Naive thymus-derived CD4-positive, alpha-beta T cell (primary cell): ENCODE measurements at regions of chr2 and their contacts with region 1.

Region 1: DNA sequence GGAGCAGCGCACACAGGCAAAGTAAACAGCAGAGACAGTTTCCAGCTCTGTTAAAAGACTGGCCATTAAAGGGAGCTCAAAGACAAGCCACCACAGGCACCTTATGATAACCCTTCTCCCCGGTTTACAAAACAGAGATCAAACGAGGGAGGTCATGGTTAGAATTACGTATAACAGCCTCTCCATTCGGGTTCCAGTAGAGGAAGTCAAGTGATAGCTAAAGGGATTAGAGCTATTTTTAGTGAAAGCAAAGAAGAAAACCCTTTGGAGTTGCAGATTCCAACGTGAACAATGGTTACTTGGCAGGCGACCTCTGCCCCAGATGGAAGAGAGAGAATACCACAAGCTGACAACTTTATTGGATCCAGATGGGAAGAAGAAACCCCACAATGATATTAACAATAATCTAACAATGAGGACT is 31.2 kb upstream of the EDAR start:
- DNase-seq: peak in 6 of 9 donors; percentile 28 to 66 (median 46)
- ATAC-seq: peak; percentile 71
- H3K4me3 ChIP-seq: no peak overlapping the region
- H3K4me3 Mint-ChIP-seq: peak overlapping the region in 8 of 10 donors; percentile 7 to 63 (median 23)
- H3K27ac ChIP-seq: no peak overlapping the region
- H3K27ac Mint-ChIP-seq: peak overlapping the region in 8 of 9 donors; percentile 7 to 86 (median 44)
- H3K4me1 ChIP-seq: peaks cover 0 to 14% of the 10 kb centered on the region in 2 donors
- H3K4me1 Mint-ChIP-seq: peaks cover 12 to 54% (median 40%) of the 10 kb centered on the region in 7 donors
- H3K27me3 ChIP-seq: no peaks in the 10 kb centered on the region
- H3K27me3 Mint-ChIP-seq: peaks cover 0 to 9% (median 0%) of the 10 kb centered on the region in 5 donors

Region 2: DNA sequence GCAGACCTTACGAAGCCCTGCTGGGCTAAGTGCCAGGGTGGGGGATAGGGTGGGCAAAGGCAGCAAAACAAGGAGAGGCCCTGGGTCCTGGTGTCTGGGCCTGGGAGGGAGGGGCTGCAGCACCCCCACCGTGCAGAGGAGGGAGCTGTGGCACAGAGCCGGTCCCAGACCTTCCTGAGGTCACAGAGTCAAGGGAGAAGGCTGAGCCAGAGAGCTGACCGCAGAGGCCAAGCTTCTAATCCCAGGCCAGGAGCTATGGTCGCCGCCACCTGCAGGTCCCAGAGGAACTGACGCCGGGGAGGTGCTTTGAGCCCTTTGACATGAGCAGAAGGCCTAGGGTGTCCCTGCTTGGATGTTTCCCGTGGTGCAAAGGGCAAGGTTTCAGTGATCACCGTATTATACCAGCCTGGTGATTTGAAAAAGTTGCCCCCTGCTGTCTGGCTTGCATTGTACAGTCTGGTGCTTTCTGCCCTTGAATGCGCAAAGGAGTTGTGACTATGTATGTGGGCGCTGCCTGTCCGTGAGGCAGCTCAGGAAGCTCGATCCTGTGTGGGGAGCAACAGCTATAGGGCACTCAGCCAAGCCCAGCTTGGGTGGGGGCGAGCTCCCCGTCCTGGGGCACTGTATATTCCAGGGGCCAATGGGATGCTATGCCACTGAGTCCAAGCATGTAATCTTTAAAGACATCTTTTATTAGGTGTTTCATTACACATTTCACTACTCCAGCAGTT is 75.5 kb before region 1 on chr2:
- CTCF ChIA-PET with region 1: no interaction called
- POLR2A ChIA-PET with region 1: no interaction called
- intact Hi-C with region 1: no loop called
- DNase-seq: no peak
- ATAC-seq: no peak
- H3K4me3 ChIP-seq: no peak overlapping the region
- H3K4me3 Mint-ChIP-seq: no peak overlapping the region
- H3K27ac ChIP-seq: no peak overlapping the region
- H3K27ac Mint-ChIP-seq: peak overlapping the region in 3 of 9 donors; percentile 25 to 56 (median 55)
- H3K4me1 ChIP-seq: no peaks in the 10 kb centered on the region
- H3K4me1 Mint-ChIP-seq: peaks cover 0 to 45% (median 24%) of the 10 kb centered on the region in 7 donors
- H3K27me3 ChIP-seq: no peaks in the 10 kb centered on the region
- H3K27me3 Mint-ChIP-seq: no peaks in the 10 kb centered on the region

Region 3: GRCh38 chr2:109447251-109447661 is 427.0 kb after region 1 on chr2:
- CTCF ChIA-PET with region 1: no interaction called
- POLR2A ChIA-PET with region 1: no interaction called
- intact Hi-C with region 1: no loop called
- DNase-seq: no peak
- ATAC-seq: no peak
- H3K4me3 ChIP-seq: no peak overlapping the region
- H3K4me3 Mint-ChIP-seq: no peak overlapping the region
- H3K27ac ChIP-seq: no peak overlapping the region
- H3K27ac Mint-ChIP-seq: no peak overlapping the region
- H3K4me1 ChIP-seq: no peaks in the 10 kb centered on the region
- H3K4me1 Mint-ChIP-seq: peaks cover 0 to 6% (median 0%) of the 10 kb centered on the region in 7 donors
- H3K27me3 ChIP-seq: no peaks in the 10 kb centered on the region
- H3K27me3 Mint-ChIP-seq: no peaks in the 10 kb centered on the region

Region 4: GRCh38 chr2:109510136-109511028 is 490.2 kb after region 1 on chr2:
- CTCF ChIA-PET with region 1: no interaction called
- POLR2A ChIA-PET with region 1: no interaction called
- intact Hi-C with region 1: loop called in 1 of 2 experiments (anchors 1 kb)
- DNase-seq: peak; percentile 56 to 83 (median 74)
- ATAC-seq: peak; percentile 80
- H3K4me3 ChIP-seq: no peak overlapping the region
- H3K4me3 Mint-ChIP-seq: no peak overlapping the region
- H3K27ac ChIP-seq: no peak overlapping the region
- H3K27ac Mint-ChIP-seq: peak overlapping the region in 4 of 9 donors; percentile 22 to 46 (median 44)
- H3K4me1 ChIP-seq: peaks cover 0 to 2% of the 10 kb centered on the region in 2 donors
- H3K4me1 Mint-ChIP-seq: peaks cover 0 to 7% (median 4%) of the 10 kb centered on the region in 7 donors
- H3K27me3 ChIP-seq: no peaks in the 10 kb centered on the region
- H3K27me3 Mint-ChIP-seq: no peaks in the 10 kb centered on the region